HAP-1 (cell line): ENCODE measurements at regions of chr14 and their contacts with region 1.

Region 1: DNA sequence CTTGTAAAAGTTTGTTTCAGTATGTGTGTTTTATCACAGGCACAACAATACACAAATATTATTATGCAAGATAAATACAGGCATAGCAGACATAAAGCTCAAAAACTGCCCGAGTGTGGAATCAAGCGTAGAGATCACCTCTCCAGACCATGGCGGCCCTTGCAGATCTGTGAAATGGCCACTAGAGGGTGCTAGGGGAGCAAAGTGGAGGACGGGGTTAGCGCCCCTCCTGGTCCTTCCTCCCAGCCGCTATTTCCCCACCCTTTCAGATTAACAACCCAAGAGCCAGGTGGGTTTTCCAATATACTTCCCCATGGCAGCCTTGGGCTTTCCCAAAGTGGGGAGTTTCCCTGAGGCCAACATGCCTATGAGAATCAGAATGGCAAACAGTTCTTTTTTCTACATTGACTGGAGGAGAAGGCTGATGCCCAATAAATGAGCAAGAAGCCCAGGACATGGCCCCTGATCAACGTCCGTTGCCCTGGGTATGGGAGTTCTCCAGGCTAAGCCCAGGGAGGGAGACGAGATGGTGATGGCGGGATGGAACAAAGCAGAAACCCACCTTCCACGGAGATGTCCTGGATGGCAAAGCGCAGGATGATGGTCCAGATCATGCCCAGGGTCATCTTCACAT is 67.4 kb downstream of the ACTN1 start:
- DNase-seq: peak; percentile 77 to 88
- H3K4me3 ChIP-seq: no peak overlapping the region
- H3K4me1 ChIP-seq: no peaks in the 10 kb centered on the region
- H3K27me3 ChIP-seq: no peaks in the 10 kb centered on the region

Region 2: GRCh38 chr14:69090187-69090789 is 178.6 kb after region 1 on chr14:
- in situ Hi-C with region 1: loop called (anchors 5 kb)
- DNase-seq: peak in 1 of 2 experiments; percentile 25
- H3K4me3 ChIP-seq: no peak overlapping the region
- H3K4me1 ChIP-seq: peaks cover 7% of the 10 kb centered on the region
- H3K27me3 ChIP-seq: no peaks in the 10 kb centered on the region